ENCODE measurements at regions of chr20 and their contacts with region 1.

Region 1: DNA sequence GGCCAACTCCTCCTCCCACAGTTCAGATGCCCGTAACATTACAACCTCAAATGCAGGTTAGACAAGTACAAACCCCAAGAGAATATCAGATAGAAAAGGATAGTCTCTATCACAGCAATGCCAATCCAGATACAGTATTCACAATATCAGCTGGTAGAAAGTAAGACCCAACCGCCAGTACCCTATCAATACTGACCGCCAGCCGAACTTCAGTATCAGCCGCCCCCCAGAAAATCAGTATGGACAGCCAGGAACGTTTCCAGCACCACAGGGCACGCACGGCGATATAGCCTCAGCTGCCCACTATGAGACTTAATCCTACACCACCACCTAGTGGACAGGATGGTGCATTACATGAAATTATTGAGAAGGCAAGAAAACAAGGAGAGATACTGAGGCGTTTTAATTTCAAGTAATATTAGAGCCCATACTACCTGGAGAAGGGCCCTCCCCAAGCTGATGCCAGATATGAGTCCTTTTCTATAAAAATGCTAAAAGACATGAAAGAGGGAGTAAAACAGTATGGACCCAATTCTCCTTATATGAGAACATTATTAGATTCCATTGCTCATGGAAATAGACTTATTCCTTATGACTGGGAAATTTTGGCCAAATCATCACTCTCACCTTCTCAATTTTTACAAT is 17.6 kb upstream of the EIF2S2 start:
- DNase-seq: peak; percentile 46
- H3K4me3 Mint-ChIP-seq: peak overlapping the region; percentile 0
- H3K27ac Mint-ChIP-seq: peak overlapping the region; percentile 38
- H3K4me1 Mint-ChIP-seq: peaks cover 7% of the 10 kb centered on the region
- H3K27me3 Mint-ChIP-seq: peaks cover 4% of the 10 kb centered on the region

Region 2: GRCh38 chr20:33862709-33863403 is 266.8 kb before region 1 on chr20:
- CTCF ChIA-PET with region 1: interaction called, 4 read pairs
- POLR2A ChIA-PET with region 1: no interaction called
- intact Hi-C with region 1: loop called (anchors 2 kb)
- DNase-seq: peak; percentile 60
- H3K4me3 Mint-ChIP-seq: no peak overlapping the region
- H3K27ac Mint-ChIP-seq: no peak overlapping the region
- H3K4me1 Mint-ChIP-seq: peaks cover 19% of the 10 kb centered on the region
- H3K27me3 Mint-ChIP-seq: no peaks in the 10 kb centered on the region

Region 3: DNA sequence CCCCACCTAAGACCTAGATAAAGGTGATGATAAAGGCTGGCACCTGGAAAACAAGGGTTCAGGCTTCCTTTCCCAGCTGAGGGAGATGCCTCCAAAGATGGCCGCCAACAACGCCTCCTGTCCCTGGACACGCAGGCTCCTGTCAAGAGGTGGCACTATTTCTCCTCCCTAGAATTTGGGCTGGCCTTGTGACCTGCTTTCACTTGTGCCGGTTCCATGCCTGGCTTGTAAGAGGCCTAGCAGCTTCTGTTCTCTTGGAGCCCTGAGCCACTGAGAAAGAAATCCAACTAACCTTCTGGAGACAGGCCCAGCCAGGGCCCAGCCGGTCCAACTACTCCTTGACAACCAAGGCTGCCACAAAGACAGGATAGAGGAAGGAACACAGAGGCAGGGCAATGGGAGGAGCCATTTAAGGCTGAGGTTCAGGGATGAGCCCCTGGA is 196.2 kb before region 1 on chr20:
- CTCF ChIA-PET with region 1: interaction called, 9 read pairs
- POLR2A ChIA-PET with region 1: no interaction called
- intact Hi-C with region 1: loop called (anchors 1 kb)
- DNase-seq: peak; percentile 80
- H3K4me3 Mint-ChIP-seq: no peak overlapping the region
- H3K27ac Mint-ChIP-seq: no peak overlapping the region
- H3K4me1 Mint-ChIP-seq: peaks cover 2% of the 10 kb centered on the region
- H3K27me3 Mint-ChIP-seq: no peaks in the 10 kb centered on the region

Region 4: DNA sequence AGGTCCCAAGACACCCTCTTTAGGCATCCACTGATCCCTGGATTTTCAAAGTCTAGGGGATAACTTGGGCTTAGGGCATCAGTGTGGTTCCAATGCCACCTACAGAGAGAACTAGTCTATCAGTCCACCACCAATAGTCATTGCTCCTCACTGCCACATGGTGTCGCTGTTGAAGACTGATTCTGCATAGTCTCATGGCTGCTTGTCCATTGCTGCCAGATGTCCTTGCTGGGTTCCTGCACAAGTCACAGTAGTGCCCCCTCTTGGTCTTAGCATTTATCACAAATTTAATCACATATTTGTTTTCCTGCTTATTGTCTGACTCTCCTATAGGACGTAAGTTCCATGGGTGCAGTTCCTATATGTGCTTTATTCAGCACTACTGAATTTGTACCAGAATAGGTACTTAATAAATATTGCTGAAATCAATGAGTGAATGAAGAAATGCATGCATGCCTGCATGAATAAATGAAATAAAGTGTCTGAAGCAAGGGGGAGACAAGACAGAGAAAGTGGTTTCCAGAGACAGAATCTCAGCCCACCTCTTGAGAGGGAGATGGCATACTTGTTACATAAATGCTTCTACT is 181.8 kb before region 1 on chr20:
- CTCF ChIA-PET with region 1: interaction called, 3 read pairs
- POLR2A ChIA-PET with region 1: no interaction called
- intact Hi-C with region 1: loop called (anchors 1 kb)
- DNase-seq: peak; percentile 60
- H3K4me3 Mint-ChIP-seq: no peak overlapping the region
- H3K27ac Mint-ChIP-seq: no peak overlapping the region
- H3K4me1 Mint-ChIP-seq: no peaks in the 10 kb centered on the region
- H3K27me3 Mint-ChIP-seq: peaks cover 9% of the 10 kb centered on the region

Measured in activated CD4-positive, alpha-beta memory T cell treated with anti-CD3 and anti-CD28 coated beads for 36 hours (primary cell).